Activated B cell treated with CpG ODN at 0.5 μM for 24 hours (primary cell): ENCODE measurements at regions of chr3 and their contacts with region 1.

Region 1: GRCh38 chr3:177405191-177405672 is 207.9 kb upstream of the TBL1XR1 start:
- DNase-seq: no peak
- ATAC-seq: no peak
- H3K4me3 Mint-ChIP-seq: no peak overlapping the region
- H3K27ac Mint-ChIP-seq: no peak overlapping the region
- H3K4me1 Mint-ChIP-seq: no peaks in the 10 kb centered on the region
- H3K27me3 Mint-ChIP-seq: no peaks in the 10 kb centered on the region
- CTCF ChIP-seq: no peak

Region 2: DNA sequence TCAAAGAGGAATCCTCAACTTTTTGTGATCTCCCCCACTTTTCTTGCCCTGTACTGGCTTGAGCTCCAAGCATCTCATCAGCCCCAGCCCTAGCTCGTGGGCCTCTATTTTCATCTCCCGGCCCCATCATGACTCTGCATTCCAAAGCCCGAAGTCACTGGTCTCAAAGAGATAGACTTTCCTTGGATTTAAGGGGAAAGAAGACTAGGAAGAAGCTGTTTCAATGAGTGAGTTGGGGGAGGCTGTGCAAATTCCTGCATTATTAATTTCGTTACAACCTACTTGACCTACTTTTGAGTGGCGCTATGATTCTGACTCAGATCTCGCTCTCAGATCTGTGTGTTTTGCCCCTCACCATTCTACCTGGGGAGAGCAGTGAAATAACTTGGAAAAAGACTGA is 58.6 kb after region 1 on chr3:
- CTCF ChIA-PET with region 1: no interaction called
- POLR2A ChIA-PET with region 1: no interaction called
- intact Hi-C with region 1: loop called (anchors 5 kb)
- DNase-seq: no peak
- ATAC-seq: no peak
- H3K4me3 Mint-ChIP-seq: no peak overlapping the region
- H3K27ac Mint-ChIP-seq: no peak overlapping the region
- H3K4me1 Mint-ChIP-seq: no peaks in the 10 kb centered on the region
- H3K27me3 Mint-ChIP-seq: no peaks in the 10 kb centered on the region
- CTCF ChIP-seq: no peak

Region 3: GRCh38 chr3:177787279-177788041 is 382.2 kb after region 1 on chr3:
- CTCF ChIA-PET with region 1: no interaction called
- POLR2A ChIA-PET with region 1: no interaction called
- intact Hi-C with region 1: no loop called
- DNase-seq: no peak
- ATAC-seq: peak; percentile 10
- H3K4me3 Mint-ChIP-seq: no peak overlapping the region
- H3K27ac Mint-ChIP-seq: no peak overlapping the region
- H3K4me1 Mint-ChIP-seq: no peaks in the 10 kb centered on the region
- H3K27me3 Mint-ChIP-seq: no peaks in the 10 kb centered on the region
- CTCF ChIP-seq: no peak